Aorta (tissue), 5 donors: ENCODE measurements at regions of chr14 and their contacts with region 1.

Region 1: DNA sequence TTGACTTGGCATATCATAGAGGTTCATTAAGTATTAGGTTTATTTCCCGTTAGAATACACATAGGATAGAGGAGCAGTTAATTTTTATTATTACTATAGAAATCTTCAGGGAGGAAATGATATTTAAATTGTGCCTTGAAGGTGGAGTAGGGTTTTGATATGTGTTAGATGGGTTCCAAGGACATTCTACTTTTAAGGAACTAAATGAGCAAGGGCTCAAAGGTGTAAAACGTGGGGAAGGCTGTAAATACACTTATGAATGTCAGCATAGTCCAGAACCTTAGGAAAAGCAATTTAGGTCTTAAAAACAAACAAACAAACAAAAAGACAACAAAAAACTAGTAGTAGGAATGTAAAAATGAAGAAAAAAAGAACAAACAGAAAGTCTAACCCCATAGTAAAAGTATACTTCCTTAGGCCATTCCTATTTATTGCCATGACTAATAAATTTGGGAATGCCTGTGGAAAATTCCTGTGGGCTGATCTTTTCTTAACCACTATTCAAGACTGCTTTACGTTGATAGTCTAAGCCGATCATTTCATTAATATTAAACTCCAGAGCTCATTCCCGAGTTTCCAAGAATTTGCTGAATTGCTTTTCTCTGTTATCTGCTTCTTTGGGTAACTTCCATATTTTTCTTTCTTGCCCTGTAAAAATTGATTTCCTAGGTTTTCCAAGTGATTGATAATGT is 180.3 kb downstream of the RAD51B start:
- DNase-seq: no peak
- ATAC-seq: no peak
- H3K4me3 ChIP-seq: no peak overlapping the region
- H3K27ac ChIP-seq: no peak overlapping the region
- H3K4me1 ChIP-seq: no peaks in the 10 kb centered on the region
- H3K27me3 ChIP-seq: no peaks in the 10 kb centered on the region

Region 2: DNA sequence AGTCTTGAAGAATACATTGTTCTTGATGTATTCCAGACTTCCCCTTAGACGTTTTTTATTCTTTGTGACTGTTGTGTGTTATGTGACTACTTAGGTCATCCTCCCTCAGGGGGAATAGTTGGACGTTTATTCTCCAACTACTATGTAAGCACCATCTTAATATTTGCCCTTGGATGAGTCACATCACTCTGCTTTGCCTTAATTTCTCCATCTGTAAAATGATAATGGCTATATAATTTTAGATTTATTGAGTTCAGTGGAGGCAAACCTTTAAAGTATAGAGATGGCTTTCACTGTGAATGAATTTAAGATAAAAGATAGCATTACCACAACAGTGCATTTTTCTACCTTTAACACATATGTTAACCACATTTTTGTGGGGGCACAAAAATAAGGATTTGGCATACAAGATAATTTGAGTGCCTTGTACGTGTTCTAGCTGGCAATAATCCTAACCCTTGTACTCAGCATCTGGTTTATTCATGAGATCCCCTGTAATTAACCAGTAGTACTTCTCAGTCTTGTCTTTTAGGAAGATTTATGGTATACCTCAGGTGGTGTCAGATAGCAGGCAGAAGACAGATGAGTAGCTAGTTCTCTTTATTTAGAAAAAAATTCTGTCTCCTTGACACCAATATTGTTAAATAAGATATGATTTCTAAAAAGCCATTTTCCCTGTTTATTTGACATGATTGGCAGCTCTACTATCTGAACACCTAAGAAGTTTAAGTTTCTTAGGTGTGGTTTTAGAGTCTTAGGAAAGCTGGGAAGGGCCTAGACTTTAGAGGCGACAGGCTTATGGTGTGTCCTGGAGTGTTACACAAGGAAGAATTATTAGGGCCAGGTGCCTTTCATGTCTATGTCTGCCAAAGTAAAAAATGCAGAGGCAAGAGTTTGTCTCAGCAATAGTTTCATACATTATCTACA is 27.9 kb before region 1 on chr14:
- intact Hi-C with region 1: no loop called
- DNase-seq: no peak
- ATAC-seq: no peak
- H3K4me3 ChIP-seq: no peak overlapping the region
- H3K27ac ChIP-seq: no peak overlapping the region
- H3K4me1 ChIP-seq: no peaks in the 10 kb centered on the region
- H3K27me3 ChIP-seq: no peaks in the 10 kb centered on the region

Region 3: GRCh38 chr14:68039593-68039992 is 39.8 kb after region 1 on chr14:
- intact Hi-C with region 1: loop called in 1 of 2 experiments (anchors 5 kb)
- DNase-seq: no peak
- ATAC-seq: no peak
- H3K4me3 ChIP-seq: no peak overlapping the region
- H3K27ac ChIP-seq: no peak overlapping the region
- H3K4me1 ChIP-seq: peaks cover 0 to 3% of the 10 kb centered on the region in 2 donors
- H3K27me3 ChIP-seq: no peaks in the 10 kb centered on the region